Kidney (tissue), 22 donors: ENCODE measurements at regions of chr10 and their contacts with region 1.

Region 1: DNA sequence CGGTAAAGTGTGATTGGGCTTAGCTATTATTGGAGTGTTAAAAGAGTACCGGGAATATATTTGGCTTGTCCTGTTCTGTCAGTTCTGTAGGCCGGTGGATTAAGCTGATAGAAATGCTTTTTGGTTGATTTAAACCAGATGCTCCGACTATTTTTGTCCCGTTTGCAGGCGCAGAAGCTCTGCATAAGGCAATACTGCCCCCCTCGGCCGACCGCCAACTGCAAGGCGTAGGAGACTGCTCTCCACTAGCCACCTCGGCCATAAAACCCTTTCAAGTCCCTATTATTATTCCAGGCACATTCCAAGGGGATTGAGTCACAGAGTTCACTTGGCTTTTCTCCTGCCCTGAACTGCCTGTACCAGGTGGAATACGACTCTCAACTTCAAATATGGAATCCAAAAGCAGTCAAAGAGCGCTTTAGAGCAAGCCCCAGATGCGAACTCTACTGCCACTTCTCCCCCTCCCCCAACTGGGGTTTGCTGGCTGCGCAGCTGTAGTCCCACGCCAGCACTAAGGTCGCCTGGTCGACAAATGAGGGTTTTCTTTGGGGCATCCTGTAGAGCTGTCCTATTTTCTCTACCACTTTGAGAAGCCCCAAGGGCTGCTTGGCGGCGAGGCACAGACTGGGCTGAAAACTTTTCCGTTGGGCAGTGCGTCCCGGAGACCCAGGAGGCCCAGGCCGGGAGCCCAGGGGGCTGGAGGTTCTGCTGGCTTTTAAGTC is 108.3 kb downstream of the REEP3 start:
- DNase-seq: peak; percentile 96 to 99 (median 99)
- H3K4me3 ChIP-seq: peak overlapping the region; percentile 63 to 82 (median 78)
- H3K27ac ChIP-seq: peak overlapping the region; percentile 91 to 94
- H3K4me1 ChIP-seq: peaks cover 5 to 10% (median 8%) of the 10 kb centered on the region in 3 donors
- H3K27me3 ChIP-seq: no peaks in the 10 kb centered on the region
- CTCF ChIP-seq: peak; percentile 76

Region 2: GRCh38 chr10:63273580-63273979 is 355.9 kb before region 1 on chr10:
- intact Hi-C with region 1: loop called (anchors 5 kb)
- DNase-seq: peak in 2 of 5 donors; percentile 25 to 63
- H3K4me3 ChIP-seq: no peak overlapping the region
- H3K27ac ChIP-seq: peak overlapping the region in 1 of 2 donors; percentile 41
- H3K4me1 ChIP-seq: peaks cover 0 to 4% (median 4%) of the 10 kb centered on the region in 3 donors
- H3K27me3 ChIP-seq: no peaks in the 10 kb centered on the region
- CTCF ChIP-seq: no peak

Region 3: DNA sequence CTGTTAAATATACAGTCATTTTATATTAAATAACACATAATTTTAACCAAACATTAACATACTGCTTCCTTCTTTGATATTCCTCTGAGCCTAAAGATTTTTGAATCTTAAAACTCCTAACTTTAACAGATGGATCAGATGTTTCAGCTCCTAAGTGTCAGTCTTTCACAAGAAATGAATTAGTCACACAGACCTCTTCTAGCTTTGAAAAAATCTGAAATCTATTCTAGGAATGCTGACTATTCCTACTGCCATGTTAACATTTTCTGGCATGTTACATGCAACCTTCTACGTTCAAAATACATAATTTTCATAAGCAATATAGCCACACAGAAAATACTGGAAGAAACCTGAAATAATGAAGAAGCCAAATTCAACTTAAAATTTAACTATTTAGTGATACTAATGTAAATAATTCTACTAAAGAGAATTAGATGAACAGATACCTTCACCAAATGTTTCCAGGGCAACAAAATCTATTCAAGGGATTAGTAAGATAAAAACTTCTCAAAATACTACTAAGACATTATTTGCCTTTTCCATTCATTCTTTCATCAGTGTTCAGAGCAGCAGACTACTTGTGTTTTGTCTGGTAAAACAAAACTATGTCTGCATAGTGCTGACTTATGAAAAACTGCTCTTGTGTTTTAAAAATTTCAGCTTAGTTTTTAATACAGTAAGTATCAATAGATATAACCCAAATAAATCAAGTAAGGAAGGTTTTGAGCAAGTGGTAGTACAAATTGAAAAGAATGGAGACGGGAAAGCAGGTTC is 172.9 kb before region 1 on chr10:
- intact Hi-C with region 1: no loop called
- DNase-seq: no peak
- H3K4me3 ChIP-seq: no peak overlapping the region
- H3K27ac ChIP-seq: no peak overlapping the region
- H3K4me1 ChIP-seq: no peaks in the 10 kb centered on the region
- H3K27me3 ChIP-seq: no peaks in the 10 kb centered on the region
- CTCF ChIP-seq: no peak

Region 4: DNA sequence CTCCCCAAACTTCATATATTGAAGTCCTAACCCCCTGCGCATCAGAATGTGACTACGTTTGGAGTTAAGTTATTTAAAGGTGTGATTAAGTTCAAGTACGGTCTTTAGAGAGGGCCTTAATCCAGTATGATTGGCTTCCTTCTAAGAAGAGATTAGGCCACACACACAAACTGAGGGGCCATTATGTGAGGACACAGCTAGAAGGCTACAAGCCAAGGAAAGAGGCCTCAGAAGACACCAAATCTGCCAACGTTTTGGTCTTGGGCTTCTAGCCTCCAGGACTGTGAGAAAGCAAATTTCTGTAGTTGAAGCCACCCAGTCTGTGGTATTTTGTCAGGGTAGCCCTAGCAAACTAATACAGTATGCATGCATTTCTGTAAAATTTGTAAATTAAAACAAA is 66.7 kb before region 1 on chr10:
- intact Hi-C with region 1: no loop called
- DNase-seq: no peak
- H3K4me3 ChIP-seq: no peak overlapping the region
- H3K27ac ChIP-seq: no peak overlapping the region
- H3K4me1 ChIP-seq: no peaks in the 10 kb centered on the region
- H3K27me3 ChIP-seq: no peaks in the 10 kb centered on the region
- CTCF ChIP-seq: no peak

Region 5: GRCh38 chr10:63573068-63573697 is 56.3 kb before region 1 on chr10:
- intact Hi-C with region 1: no loop called
- DNase-seq: peak in 2 of 5 donors; percentile 60 to 84
- H3K4me3 ChIP-seq: no peak overlapping the region
- H3K27ac ChIP-seq: peak overlapping the region in 1 of 2 donors; percentile 44
- H3K4me1 ChIP-seq: no peaks in the 10 kb centered on the region
- H3K27me3 ChIP-seq: no peaks in the 10 kb centered on the region
- CTCF ChIP-seq: no peak

Region 6: GRCh38 chr10:63711867-63712716 is 82.6 kb after region 1 on chr10:
- intact Hi-C with region 1: loop called (anchors 10 kb)
- DNase-seq: peak; percentile 48 to 98 (median 57)
- H3K4me3 ChIP-seq: no peak overlapping the region
- H3K27ac ChIP-seq: peak overlapping the region; percentile 87 to 91
- H3K4me1 ChIP-seq: peaks cover 12 to 46% (median 30%) of the 10 kb centered on the region in 3 donors
- H3K27me3 ChIP-seq: no peaks in the 10 kb centered on the region
- CTCF ChIP-seq: no peak